ENCODE measurements at regions of chr1 and their contacts with region 1.

Region 1: DNA sequence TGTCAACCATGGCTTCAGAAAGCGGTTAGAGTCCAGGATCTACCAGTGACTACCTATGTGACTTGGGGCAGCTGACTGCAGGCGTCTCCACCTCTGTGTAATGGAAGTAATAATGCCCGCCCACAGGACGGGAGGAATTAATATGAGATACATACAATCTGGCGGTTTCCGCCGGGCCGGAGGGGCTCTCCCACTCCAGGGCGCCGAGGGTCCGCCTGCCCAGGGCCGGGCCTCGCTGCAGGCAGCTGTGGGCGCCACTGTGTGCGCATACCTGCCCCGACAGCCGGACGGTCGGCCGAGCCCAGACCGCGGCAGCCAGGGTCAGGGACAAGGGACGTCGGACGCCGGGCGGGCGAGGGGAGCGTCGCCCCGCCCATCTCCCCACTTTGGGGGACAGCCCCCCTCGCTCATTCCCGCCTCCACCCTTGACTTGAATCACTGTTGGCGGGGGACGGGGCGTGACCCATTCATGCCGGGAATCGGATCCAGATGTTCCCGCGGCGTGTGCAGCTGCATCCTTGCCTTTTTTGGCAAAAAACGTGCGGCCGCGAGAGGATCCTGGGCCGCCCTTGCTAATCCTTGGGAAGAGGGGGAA is 6.0 kb upstream of the SF3A3 start:
- DNase-seq: no peak
- ATAC-seq: peak; percentile 79
- H3K4me3 ChIP-seq: peak overlapping the region; percentile 44 to 58
- H3K27ac ChIP-seq: peak overlapping the region; percentile 72
- H3K4me1 ChIP-seq: peaks cover 31% of the 10 kb centered on the region
- H3K27me3 ChIP-seq: no peaks in the 10 kb centered on the region
- CTCF ChIP-seq: no peak

Region 2: DNA sequence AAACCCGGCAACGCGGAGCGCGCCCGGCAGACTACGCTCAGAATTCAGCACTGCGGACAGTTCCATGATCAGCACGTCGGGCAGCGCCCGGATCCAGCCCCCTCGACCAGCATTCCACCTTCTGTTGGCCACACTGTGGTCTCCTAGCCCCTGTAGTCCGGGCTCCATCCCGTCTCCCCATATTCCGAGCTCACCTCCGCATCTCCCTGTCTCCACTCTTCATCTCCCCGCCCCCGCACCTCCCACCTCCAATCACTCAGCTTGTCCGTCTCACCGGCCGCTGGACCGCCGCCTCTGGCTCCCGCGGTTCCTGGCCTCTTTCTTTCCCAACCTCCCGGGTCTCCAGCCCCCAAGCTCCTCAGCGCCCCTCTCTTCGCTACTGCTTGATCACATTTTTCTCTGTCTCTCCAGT is 231.4 kb before region 1 on chr1:
- CTCF ChIA-PET with region 1: no interaction called
- POLR2A ChIA-PET with region 1: no interaction called
- in situ Hi-C with region 1: no loop called
- intact Hi-C with region 1: no loop called
- DNase-seq: no peak
- ATAC-seq: 0 out of 2 replicates have a peak, but pooled peaks have one; percentile 22
- H3K4me3 ChIP-seq: no peak overlapping the region
- H3K27ac ChIP-seq: no peak overlapping the region
- H3K4me1 ChIP-seq: peaks cover 10% of the 10 kb centered on the region; the same call in 1 of the 2 replicates
- H3K27me3 ChIP-seq: peaks cover 31% of the 10 kb centered on the region
- CTCF ChIP-seq: no peak

Region 3: GRCh38 chr1:38012363-38013226 is 16.7 kb after region 1 on chr1 and contains the start of gene UTP11:
- CTCF ChIA-PET with region 1: interaction called, 4 read pairs
- POLR2A ChIA-PET with region 1: interaction called, 23 read pairs
- in situ Hi-C with region 1: no loop called
- intact Hi-C with region 1: no loop called
- DNase-seq: peak; percentile 95
- ATAC-seq: peak; percentile 99
- H3K4me3 ChIP-seq: peak within 1 kb of the TSS; percentile 92 to 98
- H3K27ac ChIP-seq: peak within 1 kb of the TSS; percentile 96
- H3K4me1 ChIP-seq: peaks cover 19% of the 10 kb centered on the region
- H3K27me3 ChIP-seq: no peaks in the 10 kb centered on the region
- CTCF ChIP-seq: no peak
- total RNA-seq, gene UTP11: 53.8 TPM